ENCODE measurements at regions of chr7 and their contacts with region 1.

Region 1: GRCh38 chr7:45111298-45112223 is at the start of gene TBRG4:
- DNase-seq: peak; percentile 90 to 91
- ATAC-seq: peak; percentile 96 to 97
- H3K4me3 ChIP-seq: peak within 1 kb of the TSS; percentile 87 to 95 (median 91)
- H3K27ac ChIP-seq: peak within 1 kb of the TSS; percentile 93 to 99 (median 95)
- H3K4me1 ChIP-seq: peaks cover 33 to 47% of the 10 kb centered on the region in 2 donors
- H3K27me3 ChIP-seq: no peaks in the 10 kb centered on the region
- CTCF ChIP-seq: peak in 2 of 5 experiments; percentile 22 to 28
- POLR2A ChIP-seq: peak; percentile 86 to 92
- total RNA-seq, gene TBRG4: 74.3 to 105 (median 92.7) TPM

Region 2: GRCh38 chr7:44986218-44987053 is 125.1 kb before region 1 on chr7:
- in situ Hi-C with region 1: loop called in 2 of 4 experiments (anchors 10 kb)
- intact Hi-C with region 1: loop called (anchors 2 kb)
- DNase-seq: peak; percentile 82 to 90
- ATAC-seq: peak; percentile 96 to 97
- H3K4me3 ChIP-seq: peak overlapping the region; percentile 60 to 77 (median 69)
- H3K27ac ChIP-seq: peak overlapping the region; percentile 92 to 98 (median 94)
- H3K4me1 ChIP-seq: peaks cover 18 to 22% of the 10 kb centered on the region in 2 donors
- H3K27me3 ChIP-seq: no peaks in the 10 kb centered on the region
- CTCF ChIP-seq: no peak
- POLR2A ChIP-seq: peak; percentile 90 to 94

Region 3: GRCh38 chr7:44999245-45000095 is 112.1 kb before region 1 on chr7:
- in situ Hi-C with region 1: loop called in 1 of 4 experiments (anchors 10 kb)
- intact Hi-C with region 1: loop called (anchors 1 kb)
- DNase-seq: peak; percentile 99
- ATAC-seq: peak; percentile 93 to 95
- H3K4me3 ChIP-seq: peak overlapping the region; percentile 58 to 71 (median 62)
- H3K27ac ChIP-seq: peak overlapping the region; percentile 85 to 94 (median 92)
- H3K4me1 ChIP-seq: peaks cover 13 to 21% of the 10 kb centered on the region in 2 donors
- H3K27me3 ChIP-seq: no peaks in the 10 kb centered on the region
- CTCF ChIP-seq: peak in 1 of 5 experiments; percentile 22
- POLR2A ChIP-seq: peak; percentile 55 to 63

Region 4: GRCh38 chr7:45088821-45089340 is 22.7 kb before region 1 on chr7 and contains the start of gene NACAD:
- in situ Hi-C with region 1: no loop called
- intact Hi-C with region 1: loop called (anchors 1 kb)
- DNase-seq: no peak
- ATAC-seq: peak; percentile 34 to 49
- H3K4me3 ChIP-seq: peak within 1 kb of the TSS; percentile 60 to 74 (median 65)
- H3K27ac ChIP-seq: peak within 1 kb of the TSS; percentile 36 to 54 (median 47)
- H3K4me1 ChIP-seq: no peaks in the 10 kb centered on the region
- H3K27me3 ChIP-seq: peaks cover 0 to 4% (median 0%) of the 10 kb centered on the region in 3 donors
- CTCF ChIP-seq: no peak
- POLR2A ChIP-seq: no peak
- total RNA-seq, gene NACAD: 0.46 to 1.5 (median 1.1) TPM

Region 5: GRCh38 chr7:45435846-45436245 is 324.3 kb after region 1 on chr7:
- in situ Hi-C with region 1: no loop called
- intact Hi-C with region 1: no loop called
- DNase-seq: no peak
- ATAC-seq: peak in 1 of 2 donors; percentile 68
- H3K4me3 ChIP-seq: no peak overlapping the region
- H3K27ac ChIP-seq: no peak overlapping the region
- H3K4me1 ChIP-seq: no peaks in the 10 kb centered on the region
- H3K27me3 ChIP-seq: no peaks in the 10 kb centered on the region
- CTCF ChIP-seq: no peak
- POLR2A ChIP-seq: no peak

Measured in gastrocnemius medialis (tissue), 4 donors.